ENCODE measurements at regions of chr9 and their contacts with region 1.

Region 1: GRCh38 chr9:136895768-136896426 is 9.6 kb downstream of the TRAF2 start:
- DNase-seq: no peak
- H3K4me3 ChIP-seq: no peak overlapping the region
- CTCF ChIP-seq: no peak
- POLR2A ChIP-seq: no peak

Region 2: GRCh38 chr9:136849038-136849959 is 46.6 kb before region 1 on chr9 and contains the start of gene PHPT1:
- intact Hi-C with region 1: no loop called
- DNase-seq: peak; percentile 98 to 100
- H3K4me3 ChIP-seq: peak within 1 kb of the TSS; percentile 64
- CTCF ChIP-seq: no peak
- POLR2A ChIP-seq: peak in 1 of 2 donors; percentile 40
- total RNA-seq, gene PHPT1: 22.0 to 60.4 (median 48.7) TPM

Region 3: GRCh38 chr9:136949817-136950655 is 54.1 kb after region 1 on chr9:
- intact Hi-C with region 1: loop called (anchors 2 kb)
- DNase-seq: peak; percentile 92 to 99
- H3K4me3 ChIP-seq: peak overlapping the region; percentile 33
- CTCF ChIP-seq: no peak
- POLR2A ChIP-seq: no peak